Ascending aorta (tissue), 2 donors: ENCODE measurements at regions of chr2 and their contacts with region 1.

Region 1: GRCh38 chr2:238060542-238061314 is at the start of gene SCLY:
- DNase-seq: peak; percentile 89 to 98
- H3K4me3 ChIP-seq: peak within 1 kb of the TSS; percentile 85 to 92
- H3K27ac ChIP-seq: peak within 1 kb of the TSS; percentile 87 to 89
- H3K4me1 ChIP-seq: peaks cover 5 to 17% of the 10 kb centered on the region in 2 donors
- H3K27me3 ChIP-seq: no peaks in the 10 kb centered on the region
- CTCF ChIP-seq: no peak
- total RNA-seq, gene SCLY: 87.5 TPM

Region 2: DNA sequence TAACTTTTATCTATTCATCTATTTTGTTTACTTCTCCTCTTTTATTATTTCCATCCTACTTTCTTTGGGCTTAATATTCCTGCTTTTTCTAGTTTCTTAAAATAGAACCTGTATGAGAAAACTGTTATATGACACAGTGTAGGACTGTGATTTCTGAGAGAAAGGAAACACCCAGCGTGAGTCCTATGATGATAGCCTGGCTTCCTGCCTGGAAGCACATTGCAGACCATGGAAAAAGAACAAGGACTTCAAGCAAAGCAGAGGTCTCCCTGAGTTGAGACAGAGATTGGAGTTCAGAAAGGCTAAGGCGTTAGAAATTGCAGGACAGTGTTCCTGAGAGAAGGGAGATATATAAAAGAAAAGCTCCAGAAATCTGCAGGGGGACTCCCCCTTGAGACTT is 254.4 kb before region 1 on chr2:
- intact Hi-C with region 1: no loop called
- DNase-seq: no peak
- H3K4me3 ChIP-seq: no peak overlapping the region
- H3K27ac ChIP-seq: no peak overlapping the region
- H3K4me1 ChIP-seq: no peaks in the 10 kb centered on the region
- H3K27me3 ChIP-seq: no peaks in the 10 kb centered on the region
- CTCF ChIP-seq: no peak

Region 3: GRCh38 chr2:237966565-237967462 is 93.9 kb before region 1 on chr2 and contains the start of gene UBE2F:
- intact Hi-C with region 1: loop called (anchors 1 kb)
- DNase-seq: peak; percentile 84 to 98
- H3K4me3 ChIP-seq: peak within 1 kb of the TSS; percentile 82 to 87
- H3K27ac ChIP-seq: peak within 1 kb of the TSS; percentile 61 to 69
- H3K4me1 ChIP-seq: peaks cover 20 to 31% of the 10 kb centered on the region in 2 donors
- H3K27me3 ChIP-seq: no peaks in the 10 kb centered on the region
- CTCF ChIP-seq: no peak
- total RNA-seq, gene UBE2F: 50.7 TPM

Region 4: GRCh38 chr2:237998530-237998929 is 62.2 kb before region 1 on chr2:
- intact Hi-C with region 1: loop called (anchors 2 kb)
- DNase-seq: no peak
- H3K4me3 ChIP-seq: peak overlapping the region in 1 of 2 donors; percentile 19
- H3K27ac ChIP-seq: peak overlapping the region; percentile 6 to 26
- H3K4me1 ChIP-seq: peaks cover 0 to 22% of the 10 kb centered on the region in 2 donors
- H3K27me3 ChIP-seq: no peaks in the 10 kb centered on the region
- CTCF ChIP-seq: no peak

Region 5: DNA sequence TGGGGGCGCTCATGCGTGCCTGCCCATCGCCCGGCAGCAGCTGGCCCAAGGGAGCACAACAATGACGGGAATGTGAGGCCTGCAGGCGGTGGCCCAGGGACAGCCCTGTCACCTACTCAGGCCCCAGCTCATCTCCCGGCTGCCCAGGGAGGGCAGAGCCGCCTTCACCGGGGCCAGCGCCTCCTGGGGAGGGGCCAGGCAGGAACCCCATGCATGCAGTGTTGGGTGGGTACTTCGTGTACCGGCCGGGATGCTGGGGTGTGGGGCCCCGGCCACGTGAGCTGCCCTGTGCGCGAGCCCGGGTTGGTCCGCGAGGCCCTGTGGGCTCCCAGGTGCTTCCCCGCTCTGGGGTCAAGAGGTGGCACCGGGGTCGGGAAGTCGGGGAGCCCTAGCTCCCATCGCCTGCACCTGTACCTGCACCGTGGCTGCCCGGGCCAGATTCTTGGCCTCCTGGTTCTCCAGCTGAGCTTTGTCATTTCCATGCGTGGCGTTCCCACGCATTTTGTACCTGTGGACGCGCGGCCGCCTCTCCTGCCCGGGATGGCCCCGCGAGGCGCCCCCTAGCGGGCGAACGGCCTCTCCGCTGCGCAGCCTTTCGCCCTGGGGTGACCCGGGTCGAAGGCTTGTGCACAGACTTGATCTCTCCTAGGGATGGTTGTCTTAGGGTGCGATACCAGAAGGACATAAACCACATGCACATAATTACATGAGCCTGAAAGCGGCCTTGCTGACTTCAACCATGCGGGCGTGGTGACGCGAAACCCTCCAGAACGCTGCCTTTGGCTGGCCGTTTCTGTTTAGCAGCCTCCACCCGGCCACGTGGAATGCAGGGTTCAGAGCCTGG is 78.7 kb after region 1 on chr2:
- intact Hi-C with region 1: loop called (anchors 2 kb)
- DNase-seq: no peak
- H3K4me3 ChIP-seq: peak overlapping the region; percentile 54 to 65
- H3K27ac ChIP-seq: peak overlapping the region; percentile 75 to 80
- H3K4me1 ChIP-seq: peaks cover 19 to 52% of the 10 kb centered on the region in 2 donors
- H3K27me3 ChIP-seq: no peaks in the 10 kb centered on the region
- CTCF ChIP-seq: peak; percentile 47 to 69 (median 49)

Region 6: DNA sequence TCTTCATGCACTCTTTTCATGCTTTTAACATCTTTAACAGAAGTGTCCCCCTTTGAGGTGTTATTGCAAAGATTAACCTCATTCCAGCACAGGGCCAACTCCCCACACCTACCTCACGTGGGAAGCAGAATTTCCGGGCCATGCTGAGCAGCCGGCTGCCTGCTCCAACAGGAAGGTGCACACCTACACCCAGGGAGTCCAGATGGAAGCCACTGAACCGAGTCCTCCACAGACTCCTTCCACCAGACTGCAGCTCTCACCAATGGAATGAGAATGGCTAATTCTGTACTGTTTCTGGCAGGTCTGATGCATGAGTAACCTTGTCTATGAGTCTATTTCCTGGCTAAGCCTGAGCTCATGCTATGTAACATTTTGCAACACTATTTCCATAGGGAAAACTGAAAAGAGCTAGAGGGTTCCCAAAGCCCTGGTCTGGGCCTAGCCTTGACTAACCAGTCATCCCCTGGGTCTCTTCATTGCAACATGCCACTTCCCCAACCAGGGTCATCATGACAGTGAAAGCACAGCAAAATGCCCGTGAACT is 109.1 kb after region 1 on chr2:
- intact Hi-C with region 1: loop called (anchors 2 kb)
- DNase-seq: peak in 1 of 2 donors; percentile 88
- H3K4me3 ChIP-seq: no peak overlapping the region
- H3K27ac ChIP-seq: peak overlapping the region; percentile 85 to 91
- H3K4me1 ChIP-seq: peaks cover 8 to 34% of the 10 kb centered on the region in 2 donors
- H3K27me3 ChIP-seq: no peaks in the 10 kb centered on the region
- CTCF ChIP-seq: no peak

Region 7: DNA sequence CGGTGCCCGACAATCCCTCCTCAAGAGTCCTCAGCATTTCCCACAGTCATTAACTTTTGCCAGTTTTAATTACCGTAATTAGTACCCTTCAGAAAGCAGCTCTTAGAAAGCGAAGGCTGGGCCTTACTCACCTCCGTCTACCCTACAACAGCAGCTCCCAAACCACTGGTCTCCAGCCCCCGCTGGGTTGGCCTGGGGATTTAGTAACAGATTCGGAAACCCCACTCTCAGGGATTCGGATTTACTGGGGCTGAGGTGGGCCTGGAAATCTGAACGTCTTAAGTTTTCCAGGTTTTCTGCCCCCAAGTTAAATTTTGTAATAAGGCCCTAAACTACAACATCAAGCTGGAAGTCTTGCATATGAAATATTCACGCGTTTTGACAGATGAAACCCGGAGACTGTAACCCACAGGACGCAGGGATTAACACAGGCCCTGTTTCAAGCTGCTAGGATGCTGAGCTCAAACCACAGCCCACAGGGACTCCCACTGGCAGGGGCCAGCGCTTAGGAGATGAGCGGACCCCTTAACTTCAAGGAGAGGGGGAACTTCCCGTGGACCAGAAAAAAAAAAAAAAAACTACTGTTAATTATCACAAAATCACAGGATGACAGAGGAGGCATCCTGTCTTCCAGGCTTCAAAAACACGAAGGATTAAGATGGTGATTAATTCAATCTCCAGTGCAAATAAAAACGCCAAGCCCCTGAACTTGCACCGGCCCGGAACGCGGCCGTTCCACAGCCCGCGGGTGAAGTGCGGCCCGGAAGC is 141.8 kb after region 1 on chr2:
- intact Hi-C with region 1: no loop called
- DNase-seq: no peak
- H3K4me3 ChIP-seq: peak overlapping the region; percentile 99
- H3K27ac ChIP-seq: peak overlapping the region; percentile 83 to 98
- H3K4me1 ChIP-seq: peaks cover 12 to 23% of the 10 kb centered on the region in 2 donors
- H3K27me3 ChIP-seq: no peaks in the 10 kb centered on the region
- CTCF ChIP-seq: no peak

Region 8: GRCh38 chr2:238239872-238240751 is 179.4 kb after region 1 on chr2 and contains the start of gene HES6:
- intact Hi-C with region 1: loop called (anchors 2 kb)
- DNase-seq: peak; percentile 62 to 95
- H3K4me3 ChIP-seq: peak within 1 kb of the TSS; percentile 67 to 92
- H3K27ac ChIP-seq: peak within 1 kb of the TSS; percentile 64 to 79
- H3K4me1 ChIP-seq: peaks cover 0 to 23% of the 10 kb centered on the region in 2 donors
- H3K27me3 ChIP-seq: peaks cover 3% of the 10 kb centered on the region
- CTCF ChIP-seq: no peak
- total RNA-seq, gene HES6: 117 TPM